CD8-positive, alpha-beta T cell (primary cell): ENCODE measurements at regions of chr19 and their contacts with region 1.

Region 1: DNA sequence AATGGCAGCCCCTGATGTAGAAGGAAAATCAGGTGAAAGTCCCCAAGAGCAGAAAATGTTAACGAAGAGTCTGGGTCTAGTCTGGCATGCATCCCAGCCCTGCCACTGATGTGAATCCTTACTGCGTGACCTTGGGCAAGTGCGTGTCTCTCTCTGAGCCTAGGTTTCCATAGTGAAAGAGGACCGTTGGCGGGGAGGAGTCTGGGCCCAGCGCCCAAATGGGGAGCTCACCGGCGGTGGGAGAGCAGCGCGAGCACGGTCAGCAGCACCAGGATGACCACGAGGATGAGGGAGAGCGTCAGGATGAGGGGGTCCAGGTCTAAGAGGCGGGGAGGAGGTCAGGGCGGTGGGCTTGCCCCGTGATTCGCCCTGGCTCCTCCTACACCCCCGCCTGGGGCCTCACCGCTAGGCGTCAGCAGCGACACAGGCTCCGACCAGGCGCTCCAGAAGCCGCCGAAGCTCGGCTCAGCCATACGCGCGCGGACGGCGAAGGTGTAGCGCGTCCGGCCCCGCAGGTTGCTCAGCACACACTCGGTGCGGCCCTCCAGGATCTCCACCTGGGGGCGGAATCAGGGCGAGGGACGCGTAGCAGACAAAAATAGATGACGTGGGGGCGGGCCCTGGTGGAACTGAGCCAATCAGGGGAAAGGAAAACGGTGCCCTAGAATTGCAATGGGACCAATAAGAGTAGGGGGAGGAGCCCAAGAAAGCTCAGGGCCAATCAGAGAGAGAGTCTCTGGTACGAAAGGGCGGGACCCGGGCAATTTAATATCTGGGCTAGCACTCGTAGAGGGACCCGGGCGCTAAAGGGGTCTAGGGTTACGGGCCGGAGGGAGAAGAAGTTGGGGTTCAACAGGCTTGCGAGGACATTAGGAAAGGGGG is 3.2 kb downstream of the EPOR start:
- DNase-seq: peak; percentile 93 to 99 (median 96)
- ATAC-seq: peak; percentile 83
- H3K4me3 ChIP-seq: peak overlapping the region; percentile 64 to 72
- H3K4me3 Mint-ChIP-seq: peak overlapping the region; percentile 94
- H3K27ac ChIP-seq: peak overlapping the region; percentile 80 to 89
- H3K27ac Mint-ChIP-seq: peak overlapping the region; percentile 99
- H3K4me1 ChIP-seq: peaks cover 47% of the 10 kb centered on the region
- H3K4me1 Mint-ChIP-seq: peaks cover 45% of the 10 kb centered on the region
- H3K27me3 ChIP-seq: peaks cover 6 to 23% of the 10 kb centered on the region in 2 experiments
- H3K27me3 Mint-ChIP-seq: peaks cover 19% of the 10 kb centered on the region
- CTCF ChIP-seq: peak; percentile 88

Region 2: DNA sequence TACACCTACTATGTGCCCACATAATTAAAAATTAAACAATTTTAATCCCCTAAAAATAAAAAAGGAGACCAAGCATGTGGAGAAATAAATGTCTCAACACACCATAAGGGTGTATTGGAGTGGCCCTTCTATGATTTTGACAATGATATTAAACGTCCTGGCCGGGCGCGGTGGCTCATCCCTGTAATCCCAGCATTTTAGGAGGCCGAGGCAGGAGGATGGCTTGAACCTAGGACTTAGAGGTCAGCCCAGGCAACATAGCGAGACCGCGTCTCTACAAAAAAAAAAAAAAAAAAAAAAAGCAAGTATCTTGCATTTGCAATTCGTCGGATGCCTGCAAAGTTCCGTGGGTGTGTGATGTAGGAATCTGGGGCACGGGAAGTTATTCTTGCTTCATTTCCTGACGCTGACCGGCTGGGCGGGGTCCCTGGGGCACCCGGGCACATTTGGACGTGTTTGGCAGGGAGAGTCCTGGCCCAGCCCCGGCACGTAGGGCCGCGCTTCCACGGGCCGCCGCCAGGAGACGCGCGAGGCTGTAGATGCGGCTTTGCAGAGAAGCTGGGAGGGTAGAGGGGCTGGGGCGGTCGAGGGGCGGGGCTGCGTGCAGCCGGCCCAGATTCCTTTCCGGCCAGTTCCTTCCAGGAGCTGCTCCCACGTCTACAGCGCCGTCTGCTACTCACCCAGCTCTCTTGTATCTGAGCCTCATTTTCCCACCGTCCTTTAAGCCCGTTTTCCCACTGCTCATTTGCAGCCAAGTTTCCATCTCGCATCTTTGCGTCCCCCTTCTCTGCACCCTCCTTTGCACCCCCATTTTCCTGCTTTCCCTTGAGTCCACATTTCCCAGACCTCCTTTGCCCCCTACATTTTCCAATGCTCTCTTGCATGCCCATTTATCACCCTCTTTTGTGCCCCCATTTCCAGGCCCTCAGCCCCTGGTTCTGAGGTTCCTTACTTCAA is 87.2 kb before region 1 on chr19:
- CTCF ChIA-PET with region 1: interaction called, 4 read pairs
- POLR2A ChIA-PET with region 1: interaction called, 3 read pairs
- intact Hi-C with region 1: loop called (anchors 2 to 10 kb)
- DNase-seq: peak; percentile 68 to 84 (median 76)
- ATAC-seq: peak; percentile 99
- H3K4me3 ChIP-seq: no peak overlapping the region
- H3K4me3 Mint-ChIP-seq: no peak overlapping the region
- H3K27ac ChIP-seq: no peak overlapping the region
- H3K27ac Mint-ChIP-seq: no peak overlapping the region
- H3K4me1 ChIP-seq: peaks cover 8% of the 10 kb centered on the region
- H3K4me1 Mint-ChIP-seq: peaks cover 4% of the 10 kb centered on the region
- H3K27me3 ChIP-seq: peaks cover 0 to 12% of the 10 kb centered on the region in 2 experiments
- H3K27me3 Mint-ChIP-seq: peaks cover 24% of the 10 kb centered on the region
- CTCF ChIP-seq: peak; percentile 90

Region 3: DNA sequence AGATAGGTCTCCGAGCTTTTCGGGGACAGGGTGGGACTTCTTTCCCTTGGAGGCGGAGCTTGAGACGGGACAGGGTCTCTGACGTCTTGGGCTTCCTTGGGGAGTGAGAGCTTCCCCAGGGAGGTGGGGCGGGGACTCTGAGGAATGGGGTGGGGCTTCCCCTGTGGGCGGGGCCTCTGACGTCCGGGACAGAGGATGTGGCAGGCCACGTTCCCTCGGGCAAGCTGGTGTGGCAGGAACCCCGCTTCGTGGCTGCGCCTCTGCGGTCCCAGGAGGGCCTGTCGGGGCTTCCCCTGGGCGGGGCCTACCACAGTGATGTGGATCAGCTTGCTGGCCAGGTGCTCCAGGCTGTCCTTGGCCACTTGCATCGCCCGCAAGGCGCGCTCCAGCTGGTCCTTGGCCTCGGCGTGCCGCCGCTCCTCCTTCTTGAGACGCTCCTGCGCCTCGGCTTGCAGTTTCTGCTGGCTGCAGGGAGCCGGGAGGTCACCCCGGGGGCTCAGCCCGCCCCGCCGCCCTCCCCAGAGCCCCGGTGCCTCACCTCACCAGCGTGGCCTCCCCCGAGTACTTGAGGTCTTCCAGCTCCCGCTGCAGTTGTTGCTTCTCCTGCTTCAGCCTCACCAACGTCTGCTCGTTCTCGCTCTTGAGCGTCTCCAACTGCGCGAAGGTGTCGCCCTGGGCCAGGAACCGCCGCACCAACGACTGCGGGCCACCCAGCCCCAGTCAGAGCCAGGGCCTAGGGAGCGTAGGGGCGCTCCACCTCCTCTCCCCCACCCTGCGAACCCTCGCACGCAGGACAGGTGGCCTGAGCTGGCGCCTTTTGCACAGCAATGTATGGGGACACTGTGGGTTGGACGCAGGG is 41.5 kb after region 1 on chr19:
- CTCF ChIA-PET with region 1: interaction called, 13 read pairs
- POLR2A ChIA-PET with region 1: interaction called, 4 read pairs
- intact Hi-C with region 1: loop called (anchors 1 to 5 kb)
- DNase-seq: peak; percentile 37 to 84 (median 61)
- ATAC-seq: peak; percentile 67
- H3K4me3 ChIP-seq: peak overlapping the region; percentile 34 to 47
- H3K4me3 Mint-ChIP-seq: peak overlapping the region; percentile 76
- H3K27ac ChIP-seq: no peak overlapping the region
- H3K27ac Mint-ChIP-seq: no peak overlapping the region
- H3K4me1 ChIP-seq: peaks cover 49% of the 10 kb centered on the region
- H3K4me1 Mint-ChIP-seq: peaks cover 42% of the 10 kb centered on the region
- H3K27me3 ChIP-seq: peaks cover 31 to 52% of the 10 kb centered on the region in 2 experiments
- H3K27me3 Mint-ChIP-seq: peaks cover 39% of the 10 kb centered on the region
- CTCF ChIP-seq: no peak

Region 4: GRCh38 chr19:11446652-11447301 is 65.9 kb after region 1 on chr19:
- CTCF ChIA-PET with region 1: interaction called, 8 read pairs
- POLR2A ChIA-PET with region 1: no interaction called
- intact Hi-C with region 1: loop called in 1 of 2 experiments (anchors 1 kb)
- DNase-seq: peak in 7 of 9 experiments; percentile 30 to 65 (median 53)
- ATAC-seq: peak; percentile 69
- H3K4me3 ChIP-seq: no peak overlapping the region
- H3K4me3 Mint-ChIP-seq: no peak overlapping the region
- H3K27ac ChIP-seq: no peak overlapping the region
- H3K27ac Mint-ChIP-seq: no peak overlapping the region
- H3K4me1 ChIP-seq: no peaks in the 10 kb centered on the region
- H3K4me1 Mint-ChIP-seq: peaks cover 2% of the 10 kb centered on the region
- H3K27me3 ChIP-seq: no peaks in the 10 kb centered on the region
- H3K27me3 Mint-ChIP-seq: no peaks in the 10 kb centered on the region
- CTCF ChIP-seq: peak; percentile 56